ENCODE measurements at regions of chr19 and their contacts with region 1.

Region 1: DNA sequence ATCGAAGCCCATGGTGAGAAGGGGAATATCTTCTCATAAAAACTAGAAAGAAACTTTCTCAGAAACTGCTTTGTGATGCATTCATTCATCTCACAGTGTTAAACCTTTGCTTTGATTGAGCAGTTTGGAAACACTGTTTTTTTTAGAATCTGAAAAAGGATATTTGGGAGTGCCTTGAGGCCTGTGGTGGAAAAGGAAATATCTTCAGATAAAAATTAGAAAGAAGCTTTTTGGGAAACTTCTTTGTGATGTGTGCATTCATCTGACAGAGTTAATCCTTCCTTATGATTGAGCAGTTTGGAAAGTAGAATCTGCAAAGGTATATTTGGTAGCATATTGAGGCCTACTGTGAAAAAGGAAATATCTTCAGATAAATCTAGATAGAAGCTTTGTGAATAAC is 1594.9 kb downstream of the UQCRFS1 start:
- DNase-seq: no peak
- ATAC-seq: no peak
- H3K4me3 ChIP-seq: no peak overlapping the region
- H3K27ac ChIP-seq: no peak overlapping the region
- H3K4me1 ChIP-seq: no peaks in the 10 kb centered on the region
- H3K27me3 ChIP-seq: no peaks in the 10 kb centered on the region
- CTCF ChIP-seq: no peak

Region 2: DNA sequence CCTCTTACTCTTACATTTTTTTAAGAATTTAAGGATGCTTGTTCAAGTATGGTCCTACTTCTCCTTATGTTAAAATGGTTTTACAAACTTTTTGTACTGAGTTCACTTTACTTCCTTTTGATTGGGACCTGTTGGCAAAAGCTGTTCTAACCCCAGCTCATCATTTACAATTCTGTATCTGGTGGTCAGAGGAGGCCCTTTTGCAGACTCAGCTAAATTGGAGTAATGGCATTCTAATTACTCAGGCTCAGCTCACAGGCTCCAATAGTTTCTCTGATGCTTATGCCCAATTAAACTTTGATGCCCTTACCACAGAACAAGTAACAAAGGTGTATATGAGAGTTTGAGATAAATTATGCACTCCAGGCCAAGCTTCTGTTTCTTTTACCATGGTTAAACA is 37.1 kb before region 1 on chr19:
- CTCF ChIA-PET with region 1: no interaction called
- POLR2A ChIA-PET with region 1: no interaction called
- in situ Hi-C with region 1: no loop called
- intact Hi-C with region 1: no loop called
- DNase-seq: no peak
- ATAC-seq: no peak
- H3K4me3 ChIP-seq: no peak overlapping the region
- H3K27ac ChIP-seq: no peak overlapping the region
- H3K4me1 ChIP-seq: no peaks in the 10 kb centered on the region
- H3K27me3 ChIP-seq: no peaks in the 10 kb centered on the region
- CTCF ChIP-seq: no peak

Region 3: GRCh38 chr19:28065026-28065425 is 447.0 kb after region 1 on chr19:
- CTCF ChIA-PET with region 1: no interaction called
- POLR2A ChIA-PET with region 1: interaction called, 15 read pairs
- in situ Hi-C with region 1: no loop called
- intact Hi-C with region 1: no loop called
- DNase-seq: no peak
- ATAC-seq: no peak
- H3K4me3 ChIP-seq: no peak overlapping the region
- H3K27ac ChIP-seq: no peak overlapping the region
- H3K4me1 ChIP-seq: no peaks in the 10 kb centered on the region
- H3K27me3 ChIP-seq: no peaks in the 10 kb centered on the region
- CTCF ChIP-seq: no peak

Measured in Panc1 (cell line).